ENCODE measurements at regions of chr7 and their contacts with region 1.

Region 1: DNA sequence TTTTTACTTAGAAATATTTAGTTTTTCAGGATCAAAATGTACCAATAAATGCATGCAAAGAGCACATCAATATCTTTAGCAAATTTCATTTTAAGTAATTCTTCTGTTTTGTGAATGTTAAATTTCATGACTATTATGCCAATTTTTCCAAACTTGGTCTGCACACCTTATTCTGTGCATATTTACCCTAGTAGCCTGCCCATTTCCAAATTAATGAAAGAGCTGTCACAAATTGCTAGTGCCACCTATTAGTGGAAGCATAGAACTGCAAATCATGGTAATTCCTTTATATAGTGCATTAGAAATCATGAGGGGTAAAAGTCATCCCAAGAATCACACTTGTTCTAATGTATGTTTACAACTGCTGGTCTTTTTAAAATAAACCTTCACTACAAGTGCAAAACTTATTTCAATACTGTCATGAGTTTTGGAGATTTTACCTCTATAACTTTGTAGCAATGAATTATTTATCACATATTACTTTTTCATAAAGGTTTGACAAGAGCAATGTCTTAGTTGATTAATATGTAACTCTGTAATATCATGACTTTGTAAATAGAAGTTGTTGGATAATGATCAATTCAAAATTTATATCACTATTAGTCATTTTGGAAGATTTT is 5.7 kb downstream of the SEMA3A start:
- DNase-seq: no peak
- ATAC-seq: no peak
- H3K4me3 ChIP-seq: no peak overlapping the region
- H3K27ac ChIP-seq: no peak overlapping the region
- H3K4me1 ChIP-seq: no peaks in the 10 kb centered on the region
- H3K27me3 ChIP-seq: no peaks in the 10 kb centered on the region
- CTCF ChIP-seq: peak in 7 of 9 donors; percentile 28 to 63 (median 49)

Region 2: GRCh38 chr7:83866582-83866981 is 322.3 kb before region 1 on chr7:
- intact Hi-C with region 1: no loop called
- DNase-seq: no peak
- ATAC-seq: no peak
- H3K4me3 ChIP-seq: no peak overlapping the region
- H3K27ac ChIP-seq: no peak overlapping the region
- H3K4me1 ChIP-seq: no peaks in the 10 kb centered on the region
- H3K27me3 ChIP-seq: no peaks in the 10 kb centered on the region
- CTCF ChIP-seq: no peak

Region 3: GRCh38 chr7:83976295-83976694 is 212.6 kb before region 1 on chr7:
- intact Hi-C with region 1: loop called in 8 of 10 experiments (anchors 1 to 10 kb)
- DNase-seq: peak in 1 of 2 donors; percentile 4
- ATAC-seq: no peak
- H3K4me3 ChIP-seq: no peak overlapping the region
- H3K27ac ChIP-seq: no peak overlapping the region
- H3K4me1 ChIP-seq: no peaks in the 10 kb centered on the region
- H3K27me3 ChIP-seq: no peaks in the 10 kb centered on the region
- CTCF ChIP-seq: peak; percentile 25 to 83 (median 69)

Region 4: GRCh38 chr7:83984076-83984475 is 204.8 kb before region 1 on chr7:
- intact Hi-C with region 1: loop called in 6 of 10 experiments (anchors 5 to 10 kb)
- DNase-seq: no peak
- ATAC-seq: no peak
- H3K4me3 ChIP-seq: no peak overlapping the region
- H3K27ac ChIP-seq: no peak overlapping the region
- H3K4me1 ChIP-seq: peaks cover 0 to 4% (median 0%) of the 10 kb centered on the region in 9 donors
- H3K27me3 ChIP-seq: no peaks in the 10 kb centered on the region
- CTCF ChIP-seq: no peak

Region 5: GRCh38 chr7:84009051-84009450 is 179.8 kb before region 1 on chr7:
- intact Hi-C with region 1: loop called in 1 of 10 experiments (anchors 10 kb)
- DNase-seq: no peak
- ATAC-seq: no peak
- H3K4me3 ChIP-seq: no peak overlapping the region
- H3K27ac ChIP-seq: no peak overlapping the region
- H3K4me1 ChIP-seq: no peaks in the 10 kb centered on the region
- H3K27me3 ChIP-seq: no peaks in the 10 kb centered on the region
- CTCF ChIP-seq: no peak

Region 6: DNA sequence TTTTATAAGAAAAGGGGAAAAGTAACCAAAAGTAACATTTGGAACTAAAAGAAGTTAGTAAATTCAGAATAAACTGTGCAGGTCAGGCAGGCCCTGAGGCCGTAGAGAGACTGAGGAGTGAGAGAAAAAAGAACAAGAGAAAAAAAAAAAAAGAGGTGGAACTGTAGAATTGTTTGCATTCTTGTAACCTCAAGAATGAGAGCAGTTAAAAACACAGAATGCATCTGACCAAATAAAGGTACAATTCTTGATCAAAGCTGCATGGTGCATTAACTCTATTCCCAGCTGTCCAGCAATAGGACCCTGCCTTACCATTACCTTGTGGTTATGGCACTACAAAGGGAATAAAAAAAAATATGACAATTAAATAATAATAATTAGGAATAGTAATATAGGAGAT is 175.8 kb after region 1 on chr7:
- intact Hi-C with region 1: no loop called
- DNase-seq: no peak
- ATAC-seq: no peak
- H3K4me3 ChIP-seq: no peak overlapping the region
- H3K27ac ChIP-seq: no peak overlapping the region
- H3K4me1 ChIP-seq: no peaks in the 10 kb centered on the region
- H3K27me3 ChIP-seq: no peaks in the 10 kb centered on the region
- CTCF ChIP-seq: no peak

Measured in heart right ventricle (tissue), 16 donors.